ENCODE measurements at regions of chr3 and their contacts with region 1.

Region 1: GRCh38 chr3:193040836-193041672 is 123.4 kb upstream of the MB21D2 start:
- DNase-seq: no peak
- H3K4me3 Mint-ChIP-seq: no peak overlapping the region
- H3K27ac Mint-ChIP-seq: no peak overlapping the region
- H3K4me1 Mint-ChIP-seq: peaks cover 3% of the 10 kb centered on the region
- H3K27me3 Mint-ChIP-seq: peaks cover 10% of the 10 kb centered on the region

Region 2: GRCh38 chr3:192566706-192567290 is 474.3 kb before region 1 on chr3:
- intact Hi-C with region 1: loop called (anchors 1 kb)
- DNase-seq: peak; percentile 31
- H3K4me3 Mint-ChIP-seq: no peak overlapping the region
- H3K27ac Mint-ChIP-seq: no peak overlapping the region
- H3K4me1 Mint-ChIP-seq: no peaks in the 10 kb centered on the region
- H3K27me3 Mint-ChIP-seq: peaks cover 11% of the 10 kb centered on the region

Region 3: DNA sequence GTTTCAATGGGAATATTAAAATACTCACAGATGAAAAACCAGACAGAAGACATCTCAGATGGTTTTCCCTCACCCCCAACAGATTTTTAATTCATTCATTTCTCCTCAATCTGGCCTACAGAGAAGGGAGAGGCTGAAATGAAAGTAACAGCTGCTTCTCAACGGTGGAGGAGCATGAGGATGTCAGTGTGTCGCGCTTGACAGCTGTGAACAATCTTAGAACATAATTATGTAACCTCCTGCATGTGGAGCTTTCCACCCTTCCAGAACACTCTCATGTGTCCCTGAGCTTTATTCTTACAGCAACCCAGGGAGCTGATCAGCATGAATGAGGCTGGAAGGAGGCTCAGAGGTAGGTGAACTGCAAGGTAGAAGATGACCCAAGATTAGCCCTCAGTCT is 176.1 kb before region 1 on chr3:
- intact Hi-C with region 1: no loop called
- DNase-seq: no peak
- H3K4me3 Mint-ChIP-seq: no peak overlapping the region
- H3K27ac Mint-ChIP-seq: no peak overlapping the region
- H3K4me1 Mint-ChIP-seq: peaks cover 17% of the 10 kb centered on the region
- H3K27me3 Mint-ChIP-seq: no peaks in the 10 kb centered on the region

Region 4: GRCh38 chr3:192892981-192893700 is 147.9 kb before region 1 on chr3:
- intact Hi-C with region 1: loop called (anchors 2 kb)
- DNase-seq: peak; percentile 77
- H3K4me3 Mint-ChIP-seq: peak overlapping the region; percentile 34
- H3K27ac Mint-ChIP-seq: peak overlapping the region; percentile 82
- H3K4me1 Mint-ChIP-seq: peaks cover 79% of the 10 kb centered on the region
- H3K27me3 Mint-ChIP-seq: peaks cover 10% of the 10 kb centered on the region

Region 5: GRCh38 chr3:193917158-193917557 is 876.1 kb after region 1 on chr3:
- intact Hi-C with region 1: no loop called
- DNase-seq: no peak
- H3K4me3 Mint-ChIP-seq: no peak overlapping the region
- H3K27ac Mint-ChIP-seq: no peak overlapping the region
- H3K4me1 Mint-ChIP-seq: peaks cover under 1% of the 10 kb centered on the region
- H3K27me3 Mint-ChIP-seq: peaks cover 12% of the 10 kb centered on the region